ENCODE measurements at regions of chr9 and their contacts with region 1.

Region 1: GRCh38 chr9:129333953-129334724 is 156.1 kb upstream of the IER5L start:
- DNase-seq: peak; percentile 94
- ATAC-seq: peak; percentile 93
- H3K4me3 ChIP-seq: peak overlapping the region in 2 of 3 experiments; percentile 30 to 65; a peak in 4 of 6 replicates
- H3K27ac ChIP-seq: peak overlapping the region; percentile 93
- H3K4me1 ChIP-seq: peaks cover 56% of the 10 kb centered on the region
- H3K27me3 ChIP-seq: no peaks in the 10 kb centered on the region
- CTCF ChIP-seq: peak; percentile 47; the same call in 1 of the 2 replicates
- EP300 ChIP-seq: peak in 1 of 2 experiments; percentile 84; a peak in 2 of 4 replicates
- POLR2A ChIP-seq: no peak
- RAD21 ChIP-seq: peak; percentile 75

Region 2: DNA sequence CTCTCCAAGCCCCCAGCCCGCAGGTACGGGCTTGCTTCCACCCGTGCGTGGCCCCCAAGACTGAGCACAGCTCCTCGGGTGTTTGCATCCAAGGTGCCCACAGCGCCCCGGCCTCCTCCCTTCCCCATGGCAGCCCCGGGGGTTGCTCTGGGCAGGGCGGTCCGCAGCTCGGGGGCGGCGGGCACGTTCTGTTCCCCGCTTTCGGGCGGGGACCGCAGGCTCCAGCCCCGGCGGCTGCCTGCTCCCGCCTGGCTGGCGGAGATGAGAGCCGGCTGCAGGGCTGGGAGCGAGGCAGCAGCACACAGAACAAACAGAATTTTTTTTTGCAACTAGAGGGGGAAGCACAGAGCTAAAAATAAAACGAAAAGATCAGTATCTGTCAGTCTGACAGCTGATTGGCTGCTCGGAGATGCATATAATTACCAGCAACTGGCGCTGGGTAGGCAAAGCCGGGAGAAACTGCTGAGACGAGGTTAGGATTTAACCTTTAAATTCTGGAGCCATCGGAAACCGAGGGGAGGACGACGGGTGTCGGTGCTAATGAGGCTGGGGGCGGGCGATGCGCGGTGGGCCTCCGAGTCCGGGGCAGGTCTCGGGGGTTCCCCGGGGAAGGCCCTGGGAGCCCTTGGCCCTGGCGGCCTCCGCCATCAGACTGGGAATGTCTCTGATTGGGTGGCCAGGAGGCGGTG is 13.4 kb before region 1 on chr9:
- CTCF ChIA-PET with region 1: no interaction called
- POLR2A ChIA-PET with region 1: interaction called, 59 read pairs
- in situ Hi-C with region 1: no loop called
- intact Hi-C with region 1: loop called (anchors 1 kb)
- DNase-seq: peak; percentile 63
- ATAC-seq: no peak
- H3K4me3 ChIP-seq: peak overlapping the region in 1 of 3 experiments; percentile 44; a peak in 1 of 6 replicates
- H3K27ac ChIP-seq: no peak overlapping the region
- H3K4me1 ChIP-seq: peaks cover 100% of the 10 kb centered on the region
- H3K27me3 ChIP-seq: no peaks in the 10 kb centered on the region
- CTCF ChIP-seq: no peak
- EP300 ChIP-seq: no peak
- POLR2A ChIP-seq: no peak
- RAD21 ChIP-seq: no peak

Region 3: DNA sequence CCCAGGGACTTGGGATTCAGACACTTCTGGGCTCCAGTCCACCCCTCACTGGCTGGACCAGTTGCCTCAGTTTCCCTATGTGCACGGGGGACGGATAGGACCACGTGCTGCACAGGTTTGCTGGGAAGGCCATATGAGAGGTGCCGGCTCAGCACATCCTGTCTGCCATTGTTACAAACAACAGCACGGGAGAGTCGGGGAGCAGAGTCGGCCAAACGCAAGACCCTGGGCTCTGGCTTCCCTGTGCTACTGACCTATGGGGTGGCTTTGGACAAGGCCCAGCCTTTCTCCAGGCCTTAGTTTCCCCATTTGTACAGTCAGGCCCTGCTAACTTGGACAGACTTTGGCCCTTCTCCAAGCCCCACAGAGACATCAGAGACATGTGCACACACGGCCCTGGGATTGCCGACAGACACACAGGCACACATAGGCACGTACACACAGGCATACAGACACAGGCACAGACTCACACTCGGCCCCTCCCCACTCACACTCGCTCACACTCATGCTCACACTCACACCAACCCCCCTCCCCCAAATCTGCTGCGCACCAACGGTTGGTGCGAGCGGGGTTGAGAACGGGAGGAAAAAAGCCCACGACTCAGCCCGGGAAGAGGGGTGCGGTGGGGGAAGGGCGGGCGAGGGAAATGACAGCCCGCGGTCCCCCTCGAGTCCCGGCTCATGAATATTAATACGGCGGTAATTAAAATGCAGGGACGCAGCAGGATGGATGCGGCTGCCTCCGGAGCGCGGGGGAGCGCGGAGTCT is 153.7 kb after region 1 on chr9:
- CTCF ChIA-PET with region 1: no interaction called
- POLR2A ChIA-PET with region 1: no interaction called
- in situ Hi-C with region 1: no loop called
- intact Hi-C with region 1: loop called (anchors 5 kb)
- DNase-seq: no peak
- ATAC-seq: peak; percentile 14
- H3K4me3 ChIP-seq: peak overlapping the region; percentile 68 to 86 (median 72); a peak in 5 of 6 replicates
- H3K27ac ChIP-seq: peak overlapping the region; percentile 91
- H3K4me1 ChIP-seq: peaks cover 87% of the 10 kb centered on the region
- H3K27me3 ChIP-seq: no peaks in the 10 kb centered on the region; a peak in 1 of 5 replicates
- CTCF ChIP-seq: no peak
- EP300 ChIP-seq: no peak
- POLR2A ChIP-seq: peak in 1 of 2 experiments; percentile 41; a peak in 1 of 4 replicates
- RAD21 ChIP-seq: no peak; the same call in 1 of the 2 replicates

Measured in HepG2 (cell line).